Activated CD4-positive, alpha-beta memory T cell treated with anti-CD3 and anti-CD28 coated beads for 36 hours (primary cell): ENCODE measurements at regions of chr2 and their contacts with region 1.

Region 1: DNA sequence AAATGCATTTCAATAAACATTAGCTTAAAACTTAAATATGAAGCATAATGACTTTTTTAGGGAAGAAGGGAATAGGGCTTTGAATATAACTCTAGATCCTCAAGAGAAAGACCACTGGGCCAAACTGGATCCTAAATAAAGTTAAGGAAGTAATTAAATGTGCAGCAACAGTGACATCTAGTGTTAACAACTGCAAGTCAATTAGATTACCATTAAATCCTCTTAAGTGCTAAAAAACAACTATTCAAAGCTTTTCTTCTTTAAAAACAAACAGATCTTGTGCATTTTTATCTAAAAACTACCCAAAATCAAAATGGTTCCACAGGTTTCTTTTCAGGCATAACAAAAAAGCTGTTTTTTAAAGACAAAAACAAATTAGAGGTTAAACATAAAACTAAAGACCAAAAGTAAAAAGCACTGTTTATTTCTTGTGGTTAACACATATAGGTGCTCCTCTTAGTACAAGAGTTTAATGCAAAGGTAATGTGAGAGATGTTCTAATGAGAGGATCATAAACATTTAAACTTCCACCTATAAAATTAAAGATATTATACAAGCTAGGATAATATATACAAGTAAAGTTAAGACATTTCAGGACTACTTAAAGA is 111.4 kb downstream of the THADA start:
- DNase-seq: no peak
- H3K4me3 Mint-ChIP-seq: no peak overlapping the region
- H3K27ac Mint-ChIP-seq: no peak overlapping the region
- H3K4me1 Mint-ChIP-seq: peaks cover 10% of the 10 kb centered on the region
- H3K27me3 Mint-ChIP-seq: no peaks in the 10 kb centered on the region

Region 2: GRCh38 chr2:42828487-42829425 is 655.7 kb before region 1 on chr2:
- CTCF ChIA-PET with region 1: no interaction called
- POLR2A ChIA-PET with region 1: no interaction called
- intact Hi-C with region 1: loop called (anchors 5 kb)
- DNase-seq: peak; percentile 78
- H3K4me3 Mint-ChIP-seq: no peak overlapping the region
- H3K27ac Mint-ChIP-seq: no peak overlapping the region
- H3K4me1 Mint-ChIP-seq: peaks cover 14% of the 10 kb centered on the region
- H3K27me3 Mint-ChIP-seq: peaks cover 2% of the 10 kb centered on the region

Region 3: GRCh38 chr2:42944779-42945415 is 539.5 kb before region 1 on chr2:
- CTCF ChIA-PET with region 1: interaction called, 22 read pairs
- POLR2A ChIA-PET with region 1: no interaction called
- intact Hi-C with region 1: loop called (anchors 10 kb)
- DNase-seq: no peak
- H3K4me3 Mint-ChIP-seq: no peak overlapping the region
- H3K27ac Mint-ChIP-seq: no peak overlapping the region
- H3K4me1 Mint-ChIP-seq: no peaks in the 10 kb centered on the region
- H3K27me3 Mint-ChIP-seq: no peaks in the 10 kb centered on the region

Region 4: GRCh38 chr2:42974721-42975717 is 509.4 kb before region 1 on chr2:
- CTCF ChIA-PET with region 1: interaction called, 7 read pairs
- POLR2A ChIA-PET with region 1: no interaction called
- intact Hi-C with region 1: loop called (anchors 5 kb)
- DNase-seq: peak; percentile 61
- H3K4me3 Mint-ChIP-seq: no peak overlapping the region
- H3K27ac Mint-ChIP-seq: no peak overlapping the region
- H3K4me1 Mint-ChIP-seq: peaks cover 13% of the 10 kb centered on the region
- H3K27me3 Mint-ChIP-seq: no peaks in the 10 kb centered on the region

Region 5: DNA sequence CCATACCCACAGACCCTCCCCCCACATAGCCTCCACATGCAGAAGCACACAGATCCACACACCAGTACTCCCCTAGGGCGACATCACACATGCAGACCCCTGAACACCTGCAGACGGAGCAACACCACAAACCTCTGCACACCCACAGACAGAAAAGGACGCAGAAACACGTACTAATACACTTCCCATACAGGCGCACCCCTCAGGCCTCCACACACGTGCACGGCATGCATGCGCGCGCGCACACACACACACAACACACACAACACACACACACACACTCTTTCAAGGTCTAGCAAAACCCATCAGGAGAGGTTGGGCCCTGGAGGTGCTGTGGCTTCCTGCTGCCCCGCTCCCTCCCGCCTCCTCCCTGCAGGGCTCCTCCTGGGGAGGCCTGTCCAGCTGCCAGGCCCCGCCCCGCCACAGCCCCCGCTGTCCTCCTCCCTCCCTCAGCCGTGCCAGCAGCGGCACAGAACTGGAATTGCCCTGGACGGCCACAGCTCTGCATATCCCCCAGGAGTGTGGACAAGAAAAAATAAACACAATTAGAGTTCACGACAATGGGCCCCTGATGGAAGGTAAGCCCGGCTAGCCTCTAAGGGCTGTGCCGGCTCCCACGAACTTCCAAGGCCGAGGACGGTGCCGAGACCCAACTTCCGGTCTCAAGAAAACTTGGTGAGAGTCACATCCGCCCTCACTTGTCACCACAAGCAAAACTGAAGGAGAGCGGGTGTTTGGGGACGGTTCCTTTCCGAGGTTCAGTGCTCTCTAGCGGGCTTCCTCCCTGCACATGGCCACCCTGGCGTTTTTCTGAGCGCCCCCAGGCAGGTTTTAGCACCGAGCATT is 264.8 kb before region 1 on chr2:
- CTCF ChIA-PET with region 1: interaction called, 23 read pairs
- POLR2A ChIA-PET with region 1: no interaction called
- intact Hi-C with region 1: no loop called
- DNase-seq: peak; percentile 89
- H3K4me3 Mint-ChIP-seq: peak overlapping the region; percentile 88
- H3K27ac Mint-ChIP-seq: peak overlapping the region; percentile 95
- H3K4me1 Mint-ChIP-seq: peaks cover 42% of the 10 kb centered on the region
- H3K27me3 Mint-ChIP-seq: no peaks in the 10 kb centered on the region

Region 6: GRCh38 chr2:43387092-43388062 is 97.0 kb before region 1 on chr2:
- CTCF ChIA-PET with region 1: interaction called, 4 read pairs
- POLR2A ChIA-PET with region 1: no interaction called
- intact Hi-C with region 1: loop called (anchors 5 kb)
- DNase-seq: peak; percentile 20
- H3K4me3 Mint-ChIP-seq: no peak overlapping the region
- H3K27ac Mint-ChIP-seq: peak overlapping the region; percentile 28
- H3K4me1 Mint-ChIP-seq: peaks cover 31% of the 10 kb centered on the region
- H3K27me3 Mint-ChIP-seq: no peaks in the 10 kb centered on the region

Region 7: GRCh38 chr2:43531251-43531650 is 46.8 kb after region 1 on chr2:
- CTCF ChIA-PET with region 1: no interaction called
- POLR2A ChIA-PET with region 1: no interaction called
- intact Hi-C with region 1: no loop called
- DNase-seq: no peak
- H3K4me3 Mint-ChIP-seq: no peak overlapping the region
- H3K27ac Mint-ChIP-seq: no peak overlapping the region
- H3K4me1 Mint-ChIP-seq: peaks cover 4% of the 10 kb centered on the region
- H3K27me3 Mint-ChIP-seq: no peaks in the 10 kb centered on the region

Region 8: DNA sequence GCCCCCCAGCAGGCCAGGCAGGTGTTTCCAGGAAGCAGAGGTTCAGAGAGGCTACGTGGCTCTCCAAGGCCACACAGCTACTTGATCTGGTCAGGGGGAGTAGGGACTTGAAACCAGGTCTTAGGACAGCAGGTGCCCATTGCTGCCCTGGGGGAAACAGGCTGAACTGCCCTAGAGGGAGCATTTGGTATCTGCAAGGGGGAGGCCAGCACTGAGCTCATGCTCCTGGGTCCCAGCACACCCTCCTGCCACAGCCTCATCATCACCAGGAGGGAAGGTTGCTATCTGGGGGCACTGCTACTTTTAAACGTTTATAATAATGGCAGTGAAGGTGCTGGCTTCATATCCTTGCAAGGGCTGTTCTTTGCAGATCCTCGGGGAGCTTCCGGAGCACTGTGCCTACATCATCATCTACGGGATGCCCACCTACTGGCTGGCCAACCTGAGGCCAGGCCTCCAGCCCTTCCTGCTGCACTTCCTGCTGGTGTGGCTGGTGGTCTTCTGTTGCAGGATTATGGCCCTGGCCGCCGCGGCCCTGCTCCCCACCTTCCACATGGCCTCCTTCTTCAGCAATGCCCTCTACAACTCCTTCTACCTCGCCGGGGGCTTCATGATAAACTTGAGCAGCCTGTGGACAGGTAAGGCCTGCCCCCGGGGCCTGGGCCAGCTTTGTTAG is 390.5 kb after region 1 on chr2:
- CTCF ChIA-PET with region 1: no interaction called
- POLR2A ChIA-PET with region 1: no interaction called
- intact Hi-C with region 1: no loop called
- DNase-seq: no peak
- H3K4me3 Mint-ChIP-seq: no peak overlapping the region
- H3K27ac Mint-ChIP-seq: no peak overlapping the region
- H3K4me1 Mint-ChIP-seq: peaks cover 3% of the 10 kb centered on the region
- H3K27me3 Mint-ChIP-seq: peaks cover 11% of the 10 kb centered on the region